ENCODE measurements at regions of chr9 and their contacts with region 1.

Region 1: GRCh38 chr9:132190966-132191365 is 29.1 kb downstream of the NTNG2 start:
- DNase-seq: no peak
- H3K4me3 ChIP-seq: no peak overlapping the region
- H3K27me3 ChIP-seq: peaks cover 18% of the 10 kb centered on the region
- CTCF ChIP-seq: no peak

Region 2: GRCh38 chr9:132169672-132170392 is 21.1 kb before region 1 on chr9:
- CTCF ChIA-PET with region 1: interaction called, 10 read pairs
- POLR2A ChIA-PET with region 1: no interaction called
- DNase-seq: no peak
- H3K4me3 ChIP-seq: no peak overlapping the region
- H3K27me3 ChIP-seq: peaks cover 23% of the 10 kb centered on the region
- CTCF ChIP-seq: peak; percentile 86

Measured in BJ (cell line).